ENCODE measurements at regions of chr9 and their contacts with region 1.

Region 1: DNA sequence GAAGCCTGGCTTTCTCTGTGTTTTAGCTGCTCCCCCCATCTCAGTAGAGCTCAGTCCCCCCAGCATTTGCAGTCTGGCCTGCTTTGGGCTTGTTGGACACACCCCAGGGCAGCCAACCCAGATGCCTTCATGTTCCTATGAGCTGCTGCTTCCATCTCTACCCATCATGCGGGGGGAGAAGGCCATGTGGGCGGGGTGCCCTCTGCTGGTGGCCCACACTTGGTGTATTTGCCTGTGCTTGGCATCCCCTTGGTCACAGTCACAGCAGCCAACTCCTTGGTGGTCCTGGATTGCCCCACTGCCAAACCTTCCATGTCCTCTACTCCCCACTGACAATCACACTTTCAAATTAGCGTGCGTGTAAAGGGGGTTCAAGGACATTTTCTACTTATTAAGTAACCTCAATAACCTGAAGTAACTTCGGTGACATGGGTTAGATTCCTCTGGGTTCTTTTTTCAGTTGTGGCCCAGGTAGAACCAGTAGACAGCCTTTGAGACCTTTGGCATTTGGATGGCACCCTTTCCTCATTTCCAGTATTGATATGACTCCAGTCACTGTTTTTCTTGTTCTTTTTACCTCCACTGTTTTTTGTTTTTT is 42.8 kb downstream of the SNX30 start:
- DNase-seq: peak in 9 of 10 donors; percentile 56 to 88 (median 72)
- H3K4me3 ChIP-seq: no peak overlapping the region
- H3K27ac ChIP-seq: peak overlapping the region in 30 of 59 donors; percentile 3 to 73 (median 39)
- H3K27me3 ChIP-seq: no peaks in the 10 kb centered on the region
- CTCF ChIP-seq: peak in 55 of 56 donors; percentile 34 to 80 (median 62)

Region 2: DNA sequence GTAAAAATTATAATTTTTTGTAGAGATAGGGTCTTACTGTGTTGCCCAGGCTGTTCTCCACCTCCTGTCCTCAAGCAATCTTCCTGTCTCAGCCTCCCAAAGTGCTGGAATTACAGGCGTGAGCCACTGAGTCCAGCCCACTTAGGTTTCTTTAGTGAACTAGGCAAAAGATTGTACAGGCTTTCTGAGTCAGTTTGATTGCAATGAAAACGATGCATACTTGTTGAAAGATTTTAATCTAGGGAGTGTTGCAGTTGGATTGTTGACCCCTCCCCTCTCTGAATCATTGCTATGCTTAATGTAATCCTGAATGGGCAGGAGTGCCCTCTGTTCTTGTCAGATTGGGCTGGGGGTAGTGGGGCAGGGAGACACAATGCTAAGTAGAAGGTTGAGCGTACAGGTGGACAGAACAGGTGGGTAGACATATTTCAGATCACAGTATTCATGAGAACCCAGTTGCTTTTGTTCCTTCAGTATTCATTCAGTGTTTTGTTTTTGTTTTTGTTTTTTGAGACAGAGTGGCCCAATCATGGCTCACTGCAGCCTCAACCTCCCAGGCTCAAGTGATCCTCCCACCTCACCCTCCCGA is 236.7 kb before region 1 on chr9:
- intact Hi-C with region 1: no loop called
- DNase-seq: no peak
- H3K4me3 ChIP-seq: no peak overlapping the region
- H3K27ac ChIP-seq: no peak overlapping the region
- H3K27me3 ChIP-seq: no peaks in the 10 kb centered on the region
- CTCF ChIP-seq: no peak

Region 3: DNA sequence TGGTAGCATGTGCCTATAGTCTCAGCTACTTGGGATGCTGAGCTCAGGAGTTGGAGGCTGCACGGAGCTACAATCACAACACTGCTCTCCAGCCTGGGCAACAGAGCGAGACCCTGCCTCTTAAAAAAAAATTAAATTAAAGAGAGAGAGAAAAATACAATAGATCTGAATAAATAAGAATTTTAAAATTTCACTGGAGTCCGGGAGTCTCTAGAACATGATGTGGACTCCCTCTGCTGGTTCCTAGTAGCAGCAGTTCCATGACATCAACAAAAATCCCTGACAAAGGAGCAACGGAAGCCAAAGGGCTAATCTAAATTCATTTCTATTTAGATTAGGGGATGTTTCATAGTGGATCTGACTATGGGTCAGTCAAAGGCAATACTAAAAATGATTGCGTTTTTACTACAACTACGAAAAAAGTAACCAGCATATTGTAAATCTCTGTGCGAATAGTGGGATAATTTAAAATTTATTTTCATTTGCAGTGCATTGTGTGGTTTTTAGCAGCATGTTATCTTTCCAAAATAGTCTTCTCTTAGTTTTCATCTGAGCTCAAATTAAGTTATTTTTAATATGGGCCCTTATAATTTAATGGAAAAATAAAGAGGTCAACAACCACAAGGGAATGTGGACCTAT is 82.1 kb before region 1 on chr9:
- intact Hi-C with region 1: loop called (anchors 5 to 10 kb)
- DNase-seq: peak in 2 of 10 donors; percentile 9 to 46
- H3K4me3 ChIP-seq: peak overlapping the region in 28 of 59 donors; percentile 2 to 51 (median 24)
- H3K27ac ChIP-seq: peak overlapping the region in 51 of 59 donors; percentile 17 to 85 (median 65)
- H3K27me3 ChIP-seq: no peaks in the 10 kb centered on the region
- CTCF ChIP-seq: peak; percentile 30 to 89 (median 72)

Region 4: GRCh38 chr9:112750111-112750767 is 43.1 kb before region 1 on chr9 and contains the start of gene SNX30:
- intact Hi-C with region 1: loop called (anchors 5 kb)
- DNase-seq: peak; percentile 83 to 93 (median 89)
- H3K4me3 ChIP-seq: peak within 1 kb of the TSS; percentile 78 to 99 (median 94)
- H3K27ac ChIP-seq: peak within 1 kb of the TSS; percentile 83 to 100 (median 97)
- H3K27me3 ChIP-seq: no peaks in the 10 kb centered on the region
- CTCF ChIP-seq: peak in 48 of 56 donors; percentile 9 to 63 (median 42)
- total RNA-seq, gene SNX30: 19.1 to 51.5 (median 35.4) TPM

Region 5: DNA sequence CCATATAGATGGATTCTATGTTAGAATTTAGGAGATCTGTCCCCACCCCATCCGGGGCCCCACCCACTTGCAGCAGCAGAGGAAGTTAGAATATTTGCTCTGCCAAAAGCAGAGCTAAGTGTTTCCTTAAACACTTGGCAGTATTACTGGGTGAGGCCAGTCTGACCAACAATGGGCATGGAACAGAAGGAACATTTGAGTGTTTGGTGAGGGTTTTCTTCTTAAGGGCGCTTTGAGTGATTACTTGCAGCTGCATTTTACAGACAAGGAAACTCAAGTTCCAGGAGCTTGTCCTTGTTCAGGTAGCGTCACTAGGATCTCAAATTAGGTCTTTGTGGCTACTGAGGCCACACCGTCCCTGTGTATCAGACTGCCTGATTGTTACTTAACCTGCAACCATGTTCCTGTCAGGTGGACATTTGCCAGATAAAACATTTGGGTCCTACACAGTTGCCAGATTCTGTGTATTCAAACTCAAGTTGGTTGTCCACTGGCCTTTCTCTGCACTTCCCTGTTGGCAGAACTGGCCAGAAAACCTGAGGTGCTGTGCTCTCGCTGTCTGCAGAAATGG is 38.1 kb after region 1 on chr9:
- intact Hi-C with region 1: no loop called
- DNase-seq: peak in 1 of 10 donors; percentile 58
- H3K4me3 ChIP-seq: no peak overlapping the region
- H3K27ac ChIP-seq: peak overlapping the region in 7 of 59 donors; percentile 2 to 44 (median 18)
- H3K27me3 ChIP-seq: no peaks in the 10 kb centered on the region
- CTCF ChIP-seq: no peak

Measured in dorsolateral prefrontal cortex (tissue), 120 donors.